ENCODE measurements at regions of chr14 and their contacts with region 1.

Region 1: GRCh38 chr14:71932220-71932981 is at the start of gene RGS6:
- DNase-seq: no peak
- ATAC-seq: peak; percentile 76
- total RNA-seq, gene RGS6: 23.3 TPM

Region 2: GRCh38 chr14:71988939-71989338 is 56.5 kb after region 1 on chr14:
- intact Hi-C with region 1: loop called (anchors 1 kb)
- DNase-seq: no peak
- ATAC-seq: peak; percentile 38

Region 3: DNA sequence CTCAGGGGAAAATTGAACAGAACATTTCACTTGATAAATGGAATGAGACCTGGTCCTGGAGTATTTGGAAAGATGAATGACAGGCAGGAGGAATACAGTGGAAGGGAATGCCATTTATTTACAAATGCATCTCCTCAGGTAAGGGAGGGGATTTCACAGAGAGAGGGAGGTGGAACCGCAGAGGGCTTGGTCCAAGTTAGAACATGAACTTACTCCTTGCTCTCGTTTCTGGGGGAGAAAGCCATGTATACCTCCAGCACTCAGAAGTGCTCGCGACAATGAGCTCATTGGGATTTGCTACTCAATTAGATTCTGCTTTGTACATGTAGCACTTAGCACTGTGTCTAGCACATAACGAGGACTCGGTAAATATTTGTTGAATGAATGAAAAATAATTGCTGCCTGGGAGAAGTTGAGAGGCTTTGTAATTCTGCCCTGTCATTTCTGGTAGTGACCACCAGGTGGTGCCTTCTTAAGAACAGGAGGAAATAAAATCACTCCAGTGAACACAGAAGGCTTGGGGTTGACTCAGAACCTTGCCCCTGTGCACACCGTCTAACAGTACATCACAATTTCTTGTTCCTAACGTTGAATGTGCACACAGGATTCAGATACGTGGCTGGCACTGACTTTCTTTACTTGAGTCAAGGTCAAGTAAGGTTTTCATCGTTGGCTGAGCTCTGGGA is 91.5 kb after region 1 on chr14:
- intact Hi-C with region 1: loop called (anchors 10 kb)
- DNase-seq: no peak
- ATAC-seq: peak; percentile 53

Region 4: DNA sequence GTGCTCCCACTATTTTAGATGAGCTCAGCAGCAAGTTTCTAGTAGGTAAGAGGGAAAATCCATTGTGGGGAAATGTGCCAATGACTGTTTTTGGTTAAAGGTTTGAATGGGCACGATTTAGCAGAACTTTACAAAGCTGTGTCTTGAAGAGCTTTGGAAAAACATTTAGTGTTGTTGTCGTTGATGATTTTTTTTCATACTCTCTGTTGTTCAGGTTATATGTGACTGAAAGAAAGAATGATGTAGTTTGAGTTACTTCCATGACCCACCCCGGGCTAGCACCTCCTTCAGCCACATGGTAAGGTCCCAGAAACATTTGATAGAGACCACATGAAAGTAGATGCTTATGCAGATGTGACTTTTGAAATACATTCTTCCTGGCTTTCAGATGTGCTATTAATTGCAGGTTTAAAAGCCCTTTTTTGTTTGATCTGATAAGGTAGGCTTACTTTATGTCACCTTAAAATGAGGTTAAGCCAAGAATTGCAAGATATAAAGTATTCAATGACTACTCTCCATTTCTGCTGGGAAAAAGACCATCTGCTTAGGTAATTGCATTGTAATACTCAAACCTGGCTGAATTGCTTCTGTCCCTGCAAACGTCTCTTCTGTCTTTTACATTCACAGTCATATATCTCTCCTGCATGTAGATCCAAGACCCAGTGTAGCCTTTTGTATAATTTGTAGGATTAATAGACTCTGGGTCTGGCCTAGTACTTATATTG is 250.5 kb after region 1 on chr14:
- intact Hi-C with region 1: loop called (anchors 5 kb)
- DNase-seq: no peak
- ATAC-seq: no peak

Region 5: GRCh38 chr14:72291908-72292688 is 359.7 kb after region 1 on chr14:
- intact Hi-C with region 1: loop called (anchors 1 kb)
- DNase-seq: no peak
- ATAC-seq: peak; percentile 81

Region 6: DNA sequence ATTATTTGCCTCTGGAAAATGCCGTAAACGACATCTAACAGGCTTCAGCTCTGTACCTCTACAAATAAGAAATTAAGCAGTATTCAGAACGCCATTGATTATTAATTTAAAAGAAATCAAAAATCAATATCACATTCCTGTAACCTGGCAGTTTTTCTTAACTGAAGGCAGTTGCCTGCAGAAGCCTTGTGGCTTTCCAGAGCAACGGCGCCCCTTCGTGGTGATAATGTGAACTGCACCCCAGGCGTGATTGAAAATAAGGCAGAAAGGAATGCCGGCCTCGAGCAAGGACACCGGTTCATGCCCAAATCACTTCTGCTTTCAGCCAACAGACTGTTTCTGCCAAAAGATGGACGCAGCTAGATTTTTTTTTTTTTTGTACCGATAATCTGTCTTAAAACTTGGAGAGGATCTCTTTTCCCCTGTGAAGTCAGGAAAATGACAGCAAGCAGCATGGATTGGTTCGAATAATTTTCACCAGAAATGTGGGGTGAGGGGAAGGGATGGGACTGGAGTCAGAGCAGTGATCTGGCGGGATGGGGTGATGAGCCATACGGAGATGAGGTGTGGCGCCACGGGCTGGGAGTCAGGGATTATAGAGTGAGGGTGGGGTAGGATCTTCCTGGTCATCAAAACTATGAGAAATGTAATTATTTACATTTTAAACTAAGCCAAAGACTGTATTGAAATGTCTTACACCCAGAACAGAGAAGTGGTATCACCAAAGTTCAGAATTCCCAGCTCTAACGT is 488.5 kb after region 1 on chr14:
- intact Hi-C with region 1: loop called (anchors 2 kb)
- DNase-seq: peak; percentile 74
- ATAC-seq: no peak